ENCODE measurements at regions of chr12 and their contacts with region 1.

Region 1: GRCh38 chr12:666766-667308 is 3.6 kb upstream of the NINJ2 start:
- DNase-seq: no peak
- H3K4me3 Mint-ChIP-seq: peak overlapping the region; percentile 9
- H3K27ac Mint-ChIP-seq: peak overlapping the region; percentile 89
- H3K4me1 Mint-ChIP-seq: peaks cover 57% of the 10 kb centered on the region
- H3K27me3 Mint-ChIP-seq: peaks cover 5% of the 10 kb centered on the region

Region 2: DNA sequence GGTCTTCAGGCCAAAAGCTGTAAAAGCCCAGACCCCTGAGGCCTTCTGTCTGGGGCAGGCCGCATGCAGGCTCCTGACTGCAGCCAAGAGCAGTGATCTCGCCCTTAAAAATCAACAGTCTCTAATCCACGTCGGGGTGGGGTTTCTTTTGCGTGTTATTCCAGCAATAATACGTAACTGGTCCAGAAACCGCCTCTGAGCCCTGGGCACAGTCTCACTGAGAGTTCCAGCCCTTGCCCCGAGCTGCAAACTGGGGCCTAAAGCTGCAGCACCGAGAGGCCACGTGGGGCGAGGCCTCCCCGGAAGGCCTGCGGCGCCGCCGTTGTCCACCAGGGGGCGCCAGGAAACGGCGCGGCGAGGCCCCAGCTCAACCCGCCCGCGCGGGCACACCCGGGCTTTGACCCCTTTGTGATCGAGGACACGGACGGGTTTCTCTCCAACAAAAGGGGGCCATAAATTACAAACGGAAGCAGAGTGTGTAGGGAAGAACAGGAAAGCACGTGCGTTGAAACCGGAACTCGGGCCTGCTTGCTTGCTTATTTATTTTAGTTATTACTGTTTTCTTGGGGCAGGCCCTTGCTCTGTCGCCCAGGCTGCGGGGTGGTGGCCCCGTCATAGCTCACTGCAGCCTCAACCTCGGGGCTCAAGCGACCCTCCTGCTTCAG is 90.8 kb before region 1 on chr12:
- intact Hi-C with region 1: loop called (anchors 2 kb)
- DNase-seq: peak; percentile 80
- H3K4me3 Mint-ChIP-seq: no peak overlapping the region
- H3K27ac Mint-ChIP-seq: peak overlapping the region; percentile 74
- H3K4me1 Mint-ChIP-seq: peaks cover 25% of the 10 kb centered on the region
- H3K27me3 Mint-ChIP-seq: peaks cover 3% of the 10 kb centered on the region

Region 3: GRCh38 chr12:642633-643474 is 24.0 kb before region 1 on chr12:
- intact Hi-C with region 1: loop called (anchors 2 kb)
- DNase-seq: peak; percentile 77
- H3K4me3 Mint-ChIP-seq: peak overlapping the region; percentile 68
- H3K27ac Mint-ChIP-seq: peak overlapping the region; percentile 81
- H3K4me1 Mint-ChIP-seq: peaks cover 43% of the 10 kb centered on the region
- H3K27me3 Mint-ChIP-seq: no peaks in the 10 kb centered on the region

Region 4: GRCh38 chr12:685388-685787 is 18.6 kb after region 1 on chr12:
- intact Hi-C with region 1: loop called (anchors 2 kb)
- DNase-seq: peak; percentile 78
- H3K4me3 Mint-ChIP-seq: peak overlapping the region; percentile 17
- H3K27ac Mint-ChIP-seq: peak overlapping the region; percentile 81
- H3K4me1 Mint-ChIP-seq: peaks cover 32% of the 10 kb centered on the region
- H3K27me3 Mint-ChIP-seq: peaks cover 3% of the 10 kb centered on the region

Region 5: GRCh38 chr12:738712-739111 is 71.9 kb after region 1 on chr12:
- intact Hi-C with region 1: loop called (anchors 1 kb)
- DNase-seq: no peak
- H3K4me3 Mint-ChIP-seq: no peak overlapping the region
- H3K27ac Mint-ChIP-seq: no peak overlapping the region
- H3K4me1 Mint-ChIP-seq: peaks cover 21% of the 10 kb centered on the region
- H3K27me3 Mint-ChIP-seq: no peaks in the 10 kb centered on the region

Region 6: GRCh38 chr12:795305-795704 is 128.5 kb after region 1 on chr12:
- intact Hi-C with region 1: loop called (anchors 1 kb)
- DNase-seq: peak; percentile 51
- H3K4me3 Mint-ChIP-seq: peak overlapping the region; percentile 48
- H3K27ac Mint-ChIP-seq: peak overlapping the region; percentile 94
- H3K4me1 Mint-ChIP-seq: peaks cover 58% of the 10 kb centered on the region
- H3K27me3 Mint-ChIP-seq: no peaks in the 10 kb centered on the region